Panc1 (cell line): ENCODE measurements at regions of chr15 and their contacts with region 1.

Region 1: DNA sequence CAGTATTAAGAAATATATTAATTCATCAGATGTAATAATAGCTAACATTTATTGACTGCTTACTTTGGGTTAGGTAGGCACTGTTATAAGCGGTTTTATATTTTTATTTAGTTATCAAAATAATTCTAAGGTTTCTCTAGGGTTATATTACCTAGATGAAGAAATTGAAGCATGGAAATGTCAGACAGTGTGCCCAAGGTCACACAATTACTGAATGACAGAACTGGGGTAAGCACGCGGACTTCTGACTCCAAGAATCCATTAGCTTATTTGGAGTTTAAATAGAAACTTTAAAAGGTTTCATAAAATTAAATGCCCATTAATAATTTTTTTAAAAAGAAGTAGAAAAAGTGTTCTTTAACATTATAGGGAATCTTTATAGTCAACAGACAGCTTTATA is 74.3 kb downstream of the CALML4 start:
- DNase-seq: no peak
- ATAC-seq: no peak
- H3K4me3 ChIP-seq: no peak overlapping the region
- H3K27ac ChIP-seq: no peak overlapping the region
- H3K4me1 ChIP-seq: no peaks in the 10 kb centered on the region; the same call in 1 of the 2 replicates
- H3K27me3 ChIP-seq: no peaks in the 10 kb centered on the region
- CTCF ChIP-seq: no peak

Region 2: DNA sequence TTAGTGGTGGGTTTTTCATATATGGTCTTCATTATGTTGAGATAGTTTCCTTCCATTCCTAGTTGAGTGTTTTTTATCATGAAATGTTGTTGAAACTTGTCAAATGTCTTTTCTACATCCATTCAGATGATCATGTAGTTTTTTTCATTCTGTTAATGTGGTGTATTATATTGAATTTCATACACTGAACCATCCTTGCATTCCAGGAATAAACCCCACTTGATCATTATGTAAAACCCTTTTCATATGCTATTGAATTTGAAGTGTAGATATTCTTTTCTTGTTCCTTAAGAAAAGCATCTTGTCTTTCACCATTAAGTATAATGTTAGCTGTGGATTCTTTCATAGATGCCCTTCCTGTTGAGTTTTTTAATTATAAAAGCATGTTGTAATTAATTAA is 33.8 kb before region 1 on chr15:
- CTCF ChIA-PET with region 1: no interaction called
- POLR2A ChIA-PET with region 1: no interaction called
- in situ Hi-C with region 1: no loop called
- intact Hi-C with region 1: no loop called
- DNase-seq: no peak
- ATAC-seq: no peak
- H3K4me3 ChIP-seq: no peak overlapping the region
- H3K27ac ChIP-seq: no peak overlapping the region
- H3K4me1 ChIP-seq: peaks cover 2% of the 10 kb centered on the region; the same call in 1 of the 2 replicates
- H3K27me3 ChIP-seq: no peaks in the 10 kb centered on the region
- CTCF ChIP-seq: no peak

Region 3: GRCh38 chr15:68114356-68114755 is 16.5 kb before region 1 on chr15:
- CTCF ChIA-PET with region 1: interaction called, 9 read pairs
- POLR2A ChIA-PET with region 1: interaction called, 17 read pairs
- in situ Hi-C with region 1: no loop called
- intact Hi-C with region 1: no loop called
- DNase-seq: no peak
- ATAC-seq: no peak
- H3K4me3 ChIP-seq: peak overlapping the region in 1 of 2 experiments; percentile 11; a peak in 2 of 4 replicates
- H3K27ac ChIP-seq: peak overlapping the region; percentile 18; the same call in 1 of the 2 replicates
- H3K4me1 ChIP-seq: peaks cover 27% of the 10 kb centered on the region; the same call in 1 of the 2 replicates
- H3K27me3 ChIP-seq: no peaks in the 10 kb centered on the region
- CTCF ChIP-seq: no peak